ENCODE measurements at regions of chr5 and their contacts with region 1.

Region 1: GRCh38 chr5:52799983-52800393 is 12.3 kb downstream of the ITGA1 start:
- DNase-seq: peak in 1 of 2 donors; percentile 93
- H3K4me3 ChIP-seq: peak overlapping the region; percentile 64 to 72
- H3K27ac ChIP-seq: peak overlapping the region; percentile 96
- H3K4me1 ChIP-seq: peaks cover 65% of the 10 kb centered on the region
- H3K27me3 ChIP-seq: no peaks in the 10 kb centered on the region
- CTCF ChIP-seq: no peak
- POLR2A ChIP-seq: peak in 1 of 2 donors; percentile 84

Region 2: DNA sequence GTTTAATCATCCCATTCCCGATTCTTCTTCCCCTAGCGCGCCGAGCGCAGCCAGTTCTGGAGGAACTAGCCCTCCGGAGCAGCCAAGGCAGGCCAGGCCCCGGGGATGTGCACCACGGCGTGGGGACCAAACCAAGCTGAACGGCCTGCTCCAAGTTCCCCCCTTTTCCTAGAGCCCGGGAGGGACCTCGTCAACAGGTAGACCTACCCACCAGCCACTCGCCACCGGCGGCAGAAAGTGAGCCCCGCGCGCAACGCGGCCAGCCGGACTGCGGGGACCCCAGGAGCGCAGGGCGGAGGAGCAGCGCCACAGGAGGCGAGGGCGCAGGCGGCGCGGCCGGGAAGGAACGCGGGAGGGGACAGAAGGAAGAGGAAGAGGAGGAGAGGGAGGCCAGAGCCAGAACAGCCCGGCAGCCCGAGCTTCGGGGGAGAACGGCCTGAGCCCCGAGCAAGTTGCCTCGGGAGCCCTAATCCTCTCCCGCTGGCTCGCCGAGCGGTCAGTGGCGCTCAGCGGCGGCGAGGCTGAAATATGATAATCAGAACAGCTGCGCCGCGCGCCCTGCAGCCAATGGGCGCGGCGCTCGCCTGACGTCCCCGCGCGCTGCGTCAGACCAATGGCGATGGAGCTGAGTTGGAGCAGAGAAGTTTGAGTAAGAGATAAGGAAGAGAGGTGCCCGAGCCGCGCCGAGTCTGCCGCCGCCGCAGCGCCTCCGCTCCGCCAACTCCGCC is 1417.1 kb before region 1 on chr5 and contains the start of gene ISL1:
- intact Hi-C with region 1: loop called (anchors 10 kb)
- DNase-seq: no peak
- H3K4me3 ChIP-seq: peak within 1 kb of the TSS; percentile 70 to 78
- H3K27ac ChIP-seq: peak within 1 kb of the TSS; percentile 99
- H3K4me1 ChIP-seq: no peaks in the 10 kb centered on the region
- H3K27me3 ChIP-seq: no peaks in the 10 kb centered on the region
- CTCF ChIP-seq: no peak
- POLR2A ChIP-seq: peak in 1 of 2 donors; percentile 99
- total RNA-seq, gene ISL1: 25.0 TPM

Region 3: DNA sequence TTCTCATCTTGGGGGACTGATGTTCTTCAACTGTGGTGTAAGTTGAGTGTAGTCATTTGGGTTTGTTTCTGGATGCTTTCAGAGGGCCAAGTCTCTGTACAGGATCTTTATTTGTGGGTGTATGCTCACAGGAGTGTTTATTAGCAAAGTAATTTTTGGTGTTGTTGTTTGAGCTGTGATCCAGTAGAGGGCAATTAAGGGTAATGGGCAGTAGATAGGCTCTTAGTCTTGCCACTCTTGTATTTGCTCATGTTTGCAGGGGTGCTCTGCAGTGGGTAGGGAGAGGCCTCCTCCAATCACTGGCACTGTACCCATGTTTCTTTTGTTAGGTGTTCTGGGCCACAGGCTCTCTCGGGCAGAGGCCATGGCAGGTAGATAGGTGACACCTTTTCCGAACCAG is 143.3 kb after region 1 on chr5:
- intact Hi-C with region 1: no loop called
- DNase-seq: no peak
- H3K4me3 ChIP-seq: no peak overlapping the region
- H3K27ac ChIP-seq: no peak overlapping the region
- H3K4me1 ChIP-seq: no peaks in the 10 kb centered on the region
- H3K27me3 ChIP-seq: no peaks in the 10 kb centered on the region
- CTCF ChIP-seq: no peak
- POLR2A ChIP-seq: no peak

Measured in vagina (tissue), 2 donors.